ENCODE measurements at regions of chr3 and their contacts with region 1.

Region 1: GRCh38 chr3:171772427-171773056 is 37.7 kb downstream of the PLD1 start:
- ATAC-seq: peak in 7 of 8 experiments; percentile 18 to 58 (median 43)
- H3K4me3 ChIP-seq: no peak overlapping the region
- H3K27ac ChIP-seq: no peak overlapping the region
- H3K4me1 ChIP-seq: peaks cover 0 to 8% of the 10 kb centered on the region in 2 donors

Region 2: GRCh38 chr3:171646357-171647133 is 126.0 kb before region 1 on chr3:
- in situ Hi-C with region 1: loop called in 2 of 9 experiments (anchors 10 to 25 kb)
- ATAC-seq: peak in 4 of 8 experiments; percentile 40 to 60 (median 56)
- H3K4me3 ChIP-seq: no peak overlapping the region
- H3K27ac ChIP-seq: no peak overlapping the region
- H3K4me1 ChIP-seq: peaks cover 0 to 5% of the 10 kb centered on the region in 2 donors

Measured in motor neuron (in vitro differentiated cells).